Heart left ventricle (tissue), 16 donors: ENCODE measurements at regions of chr4 and their contacts with region 1.

Region 1: GRCh38 chr4:106809076-106809475 is 227.0 kb downstream of the DKK2 start:
- DNase-seq: no peak
- ATAC-seq: peak in 1 of 4 donors; percentile 49
- H3K4me3 ChIP-seq: no peak overlapping the region
- H3K27ac ChIP-seq: no peak overlapping the region
- H3K4me1 ChIP-seq: no peaks in the 10 kb centered on the region
- H3K27me3 ChIP-seq: no peaks in the 10 kb centered on the region
- CTCF ChIP-seq: peak in 5 of 12 donors; percentile 16 to 27 (median 19)
- POLR2A ChIP-seq: no peak

Region 2: GRCh38 chr4:106369456-106370060 is 439.5 kb before region 1 on chr4:
- intact Hi-C with region 1: loop called in 1 of 10 experiments (anchors 10 kb)
- DNase-seq: no peak
- ATAC-seq: no peak
- H3K4me3 ChIP-seq: no peak overlapping the region
- H3K27ac ChIP-seq: no peak overlapping the region
- H3K4me1 ChIP-seq: peaks cover 0 to 19% (median 7%) of the 10 kb centered on the region in 12 donors
- H3K27me3 ChIP-seq: peaks cover 0 to 5% (median 0%) of the 10 kb centered on the region in 9 donors
- CTCF ChIP-seq: peak; percentile 36 to 72 (median 54)
- POLR2A ChIP-seq: no peak

Region 3: GRCh38 chr4:106864231-106864630 is 55.2 kb after region 1 on chr4:
- intact Hi-C with region 1: no loop called
- DNase-seq: no peak
- ATAC-seq: no peak
- H3K4me3 ChIP-seq: no peak overlapping the region
- H3K27ac ChIP-seq: no peak overlapping the region
- H3K4me1 ChIP-seq: no peaks in the 10 kb centered on the region
- H3K27me3 ChIP-seq: no peaks in the 10 kb centered on the region
- CTCF ChIP-seq: no peak
- POLR2A ChIP-seq: no peak

Region 4: DNA sequence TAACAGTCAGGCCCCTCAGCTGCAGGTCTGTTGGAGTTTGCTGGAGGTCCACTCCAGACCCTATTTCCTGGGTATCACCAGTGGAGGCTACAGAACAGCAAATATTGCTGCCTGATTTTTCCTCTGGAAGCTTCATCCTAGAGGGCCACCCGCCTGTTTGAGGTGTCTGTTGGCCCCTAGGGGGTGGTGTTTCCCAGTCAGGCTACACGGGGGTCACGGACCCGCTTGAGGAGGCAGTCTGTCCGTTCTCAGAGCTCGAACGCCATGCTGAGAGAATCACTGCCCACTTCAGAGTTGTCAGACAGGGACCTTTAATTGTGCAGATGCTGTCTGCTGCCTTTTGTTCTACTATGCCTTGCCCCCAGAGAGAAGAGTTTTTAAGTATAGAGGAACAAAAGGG is 66.3 kb after region 1 on chr4:
- intact Hi-C with region 1: no loop called
- DNase-seq: no peak
- ATAC-seq: no peak
- H3K4me3 ChIP-seq: no peak overlapping the region
- H3K27ac ChIP-seq: no peak overlapping the region
- H3K4me1 ChIP-seq: no peaks in the 10 kb centered on the region
- H3K27me3 ChIP-seq: no peaks in the 10 kb centered on the region
- CTCF ChIP-seq: no peak
- POLR2A ChIP-seq: no peak